GM12878 (cell line): ENCODE measurements at regions of chr2 and their contacts with region 1.

Region 1: GRCh38 chr2:65264821-65265670 is 37.4 kb downstream of the ACTR2 start:
- DNase-seq: peak; percentile 20
- ATAC-seq: peak; percentile 80
- H3K4me3 ChIP-seq: no peak overlapping the region
- H3K27ac ChIP-seq: no peak overlapping the region
- H3K4me1 ChIP-seq: no peaks in the 10 kb centered on the region
- H3K27me3 ChIP-seq: no peaks in the 10 kb centered on the region
- CTCF ChIP-seq: peak; percentile 45 to 63 (median 56); a peak in 5 of 6 replicates
- EP300 ChIP-seq: no peak
- POLR2A ChIP-seq: no peak
- RAD21 ChIP-seq: peak; percentile 81

Region 2: DNA sequence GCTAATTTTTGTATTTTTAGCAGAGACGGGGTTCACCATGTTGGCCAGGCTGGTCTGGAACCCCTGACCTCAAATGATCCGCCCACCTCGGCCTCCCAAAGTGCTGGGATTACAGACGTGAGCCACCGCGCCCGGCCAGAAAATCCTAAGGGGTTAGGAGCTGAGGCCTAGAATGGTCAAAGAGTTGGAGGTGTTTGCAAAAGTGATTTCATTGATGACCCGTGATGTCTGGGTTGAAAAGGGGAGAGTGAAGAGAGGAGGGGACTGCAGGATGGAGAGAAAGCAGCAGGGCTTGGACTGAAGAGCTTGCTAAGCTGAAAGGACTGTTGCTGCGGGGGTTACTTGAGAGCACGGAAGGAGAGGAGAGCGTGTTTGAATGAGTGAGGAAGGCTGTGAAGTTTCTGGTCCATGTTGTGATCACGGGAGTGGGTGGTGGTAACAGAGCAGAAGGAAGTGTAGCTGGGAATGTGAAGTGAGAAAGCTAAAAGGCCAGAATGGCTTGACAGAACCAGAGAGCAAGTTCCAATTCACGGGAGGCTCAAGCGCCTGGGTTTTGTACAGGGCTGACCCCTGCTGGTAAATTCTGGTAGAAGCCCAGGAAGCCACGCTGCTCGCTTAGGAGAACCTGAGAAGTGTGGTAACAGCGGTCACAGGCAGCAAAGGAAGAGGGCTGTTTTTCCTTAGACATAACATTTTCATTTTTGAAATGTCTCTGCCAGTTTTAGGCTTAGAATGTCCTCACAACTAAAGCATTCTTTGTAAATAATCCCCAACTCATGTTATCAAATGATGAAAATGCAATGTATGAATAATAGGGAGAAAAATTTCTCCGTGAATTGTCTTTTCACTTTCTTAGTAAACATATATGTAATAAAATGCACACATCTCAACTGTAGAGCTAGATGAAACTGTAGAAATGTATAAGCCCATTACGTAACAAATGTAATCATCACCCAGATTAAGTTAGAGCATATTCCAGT is 77.9 kb before region 1 on chr2:
- CTCF ChIA-PET with region 1: no interaction called
- POLR2A ChIA-PET with region 1: no interaction called
- RAD21 ChIA-PET with region 1: no interaction called
- SMC1A ChIA-PET with region 1: no interaction called
- in situ Hi-C with region 1: no loop called
- intact Hi-C with region 1: no loop called
- DNase-seq: no peak
- ATAC-seq: peak; percentile 98
- H3K4me3 ChIP-seq: no peak overlapping the region
- H3K27ac ChIP-seq: no peak overlapping the region
- H3K4me1 ChIP-seq: no peaks in the 10 kb centered on the region
- H3K27me3 ChIP-seq: no peaks in the 10 kb centered on the region; a peak in 1 of 4 replicates
- CTCF ChIP-seq: peak; percentile 77 to 82 (median 80)
- EP300 ChIP-seq: no peak
- POLR2A ChIP-seq: no peak
- RAD21 ChIP-seq: peak; percentile 82

Region 3: GRCh38 chr2:65278531-65278981 is 13.5 kb after region 1 on chr2:
- CTCF ChIA-PET with region 1: interaction called, 7 read pairs
- POLR2A ChIA-PET with region 1: no interaction called
- RAD21 ChIA-PET with region 1: interaction called, 7 read pairs
- SMC1A ChIA-PET with region 1: interaction called, 16 read pairs
- in situ Hi-C with region 1: no loop called
- intact Hi-C with region 1: no loop called
- DNase-seq: no peak
- ATAC-seq: no peak
- H3K4me3 ChIP-seq: no peak overlapping the region
- H3K27ac ChIP-seq: no peak overlapping the region
- H3K4me1 ChIP-seq: no peaks in the 10 kb centered on the region
- H3K27me3 ChIP-seq: no peaks in the 10 kb centered on the region
- CTCF ChIP-seq: no peak
- EP300 ChIP-seq: no peak
- POLR2A ChIP-seq: no peak
- RAD21 ChIP-seq: no peak

Region 4: GRCh38 chr2:65345631-65346030 is 80.6 kb after region 1 on chr2:
- CTCF ChIA-PET with region 1: no interaction called
- POLR2A ChIA-PET with region 1: no interaction called
- RAD21 ChIA-PET with region 1: no interaction called
- SMC1A ChIA-PET with region 1: no interaction called
- in situ Hi-C with region 1: no loop called
- intact Hi-C with region 1: no loop called
- DNase-seq: no peak
- ATAC-seq: no peak
- H3K4me3 ChIP-seq: no peak overlapping the region
- H3K27ac ChIP-seq: no peak overlapping the region
- H3K4me1 ChIP-seq: peaks cover 16% of the 10 kb centered on the region
- H3K27me3 ChIP-seq: no peaks in the 10 kb centered on the region
- CTCF ChIP-seq: no peak
- EP300 ChIP-seq: no peak
- POLR2A ChIP-seq: no peak
- RAD21 ChIP-seq: no peak

Region 5: GRCh38 chr2:65366595-65367125 is 101.6 kb after region 1 on chr2:
- CTCF ChIA-PET with region 1: interaction called, 5 read pairs
- POLR2A ChIA-PET with region 1: no interaction called
- RAD21 ChIA-PET with region 1: no interaction called
- SMC1A ChIA-PET with region 1: interaction called, 10 read pairs
- in situ Hi-C with region 1: no loop called
- intact Hi-C with region 1: no loop called
- DNase-seq: peak; percentile 11
- ATAC-seq: peak; percentile 53
- H3K4me3 ChIP-seq: no peak overlapping the region
- H3K27ac ChIP-seq: no peak overlapping the region; the same call in 1 of the 2 replicates
- H3K4me1 ChIP-seq: peaks cover 40% of the 10 kb centered on the region
- H3K27me3 ChIP-seq: no peaks in the 10 kb centered on the region
- CTCF ChIP-seq: no peak
- EP300 ChIP-seq: no peak
- POLR2A ChIP-seq: no peak
- RAD21 ChIP-seq: no peak

Region 6: GRCh38 chr2:65382776-65383357 is 117.8 kb after region 1 on chr2:
- CTCF ChIA-PET with region 1: interaction called, 13 read pairs
- POLR2A ChIA-PET with region 1: no interaction called
- RAD21 ChIA-PET with region 1: no interaction called
- SMC1A ChIA-PET with region 1: interaction called, 4 read pairs
- in situ Hi-C with region 1: no loop called
- intact Hi-C with region 1: no loop called
- DNase-seq: no peak
- ATAC-seq: no peak
- H3K4me3 ChIP-seq: no peak overlapping the region
- H3K27ac ChIP-seq: peak overlapping the region; percentile 65
- H3K4me1 ChIP-seq: peaks cover 42% of the 10 kb centered on the region
- H3K27me3 ChIP-seq: no peaks in the 10 kb centered on the region
- CTCF ChIP-seq: peak in 1 of 3 experiments; percentile 37; a peak in 2 of 6 replicates
- EP300 ChIP-seq: no peak
- POLR2A ChIP-seq: no peak
- RAD21 ChIP-seq: peak; percentile 63

Region 7: GRCh38 chr2:65545837-65546805 is 281.1 kb after region 1 on chr2:
- CTCF ChIA-PET with region 1: interaction called, 5 read pairs
- POLR2A ChIA-PET with region 1: no interaction called
- RAD21 ChIA-PET with region 1: interaction called, 3 read pairs
- SMC1A ChIA-PET with region 1: interaction called, 7 read pairs
- in situ Hi-C with region 1: loop called (anchors 5 kb)
- intact Hi-C with region 1: no loop called
- DNase-seq: no peak
- ATAC-seq: no peak
- H3K4me3 ChIP-seq: no peak overlapping the region
- H3K27ac ChIP-seq: no peak overlapping the region
- H3K4me1 ChIP-seq: peaks cover 4% of the 10 kb centered on the region; the same call in 1 of the 2 replicates
- H3K27me3 ChIP-seq: no peaks in the 10 kb centered on the region; a peak in 1 of 4 replicates
- CTCF ChIP-seq: no peak
- EP300 ChIP-seq: no peak
- POLR2A ChIP-seq: no peak
- RAD21 ChIP-seq: no peak

Region 8: GRCh38 chr2:65554765-65555591 is 289.9 kb after region 1 on chr2:
- CTCF ChIA-PET with region 1: interaction called, 7 read pairs
- POLR2A ChIA-PET with region 1: no interaction called
- RAD21 ChIA-PET with region 1: no interaction called
- SMC1A ChIA-PET with region 1: interaction called, 10 read pairs
- in situ Hi-C with region 1: no loop called
- intact Hi-C with region 1: loop called (anchors 1 kb)
- DNase-seq: peak; percentile 42
- ATAC-seq: peak; percentile 83
- H3K4me3 ChIP-seq: no peak overlapping the region
- H3K27ac ChIP-seq: no peak overlapping the region
- H3K4me1 ChIP-seq: peaks cover 14% of the 10 kb centered on the region
- H3K27me3 ChIP-seq: no peaks in the 10 kb centered on the region; a peak in 1 of 4 replicates
- CTCF ChIP-seq: no peak
- EP300 ChIP-seq: no peak
- POLR2A ChIP-seq: no peak
- RAD21 ChIP-seq: no peak

Region 9: DNA sequence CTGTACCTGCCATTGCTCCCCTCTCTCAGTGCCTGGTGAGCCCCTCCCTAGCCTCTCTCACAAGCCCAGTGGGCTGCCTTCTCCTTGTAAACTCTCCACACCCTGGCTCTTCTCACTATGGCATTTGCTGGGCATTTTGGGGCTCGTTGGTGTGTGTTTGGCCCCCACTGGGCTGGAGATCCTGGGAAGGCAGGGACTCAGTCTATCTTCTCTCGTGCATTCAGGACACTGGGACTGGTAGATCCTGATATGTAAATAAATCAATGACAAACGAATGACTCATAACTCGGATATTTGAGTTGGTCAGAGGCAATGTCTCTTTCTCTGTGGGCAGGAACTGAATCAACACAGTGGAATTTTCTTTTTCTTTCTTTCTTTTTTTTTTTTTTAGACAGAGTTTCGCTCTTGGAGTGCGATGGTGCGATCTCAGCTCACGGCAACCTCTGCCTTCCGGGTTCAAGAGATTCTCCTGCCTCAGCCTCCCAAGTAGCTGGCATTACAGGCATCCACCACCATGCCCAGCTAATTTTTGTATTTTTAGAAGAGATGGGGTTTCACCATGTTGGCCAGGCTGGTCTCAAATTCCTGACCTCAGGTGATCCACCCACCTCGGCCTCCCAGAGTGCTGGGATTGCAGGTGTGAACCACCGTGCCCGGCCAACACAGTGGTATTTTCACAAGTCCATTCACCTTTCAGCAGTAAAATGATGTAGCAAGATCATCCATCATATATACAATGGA is 312.0 kb after region 1 on chr2:
- CTCF ChIA-PET with region 1: interaction called, 5 read pairs
- POLR2A ChIA-PET with region 1: no interaction called
- RAD21 ChIA-PET with region 1: interaction called, 4 read pairs
- SMC1A ChIA-PET with region 1: interaction called, 7 read pairs
- in situ Hi-C with region 1: no loop called
- intact Hi-C with region 1: loop called (anchors 1 kb)
- DNase-seq: no peak
- ATAC-seq: no peak
- H3K4me3 ChIP-seq: no peak overlapping the region
- H3K27ac ChIP-seq: no peak overlapping the region
- H3K4me1 ChIP-seq: peaks cover 3% of the 10 kb centered on the region; the same call in 1 of the 2 replicates
- H3K27me3 ChIP-seq: no peaks in the 10 kb centered on the region; a peak in 1 of 4 replicates
- CTCF ChIP-seq: no peak
- EP300 ChIP-seq: no peak
- POLR2A ChIP-seq: no peak
- RAD21 ChIP-seq: no peak